Uterus (tissue), 4 donors: ENCODE measurements at regions of chr6 and their contacts with region 1.

Region 1: GRCh38 chr6:104525677-104526312 is 333.9 kb downstream of the HACE1 start:
- DNase-seq: peak; percentile 39 to 50
- H3K4me3 ChIP-seq: no peak overlapping the region
- H3K27ac ChIP-seq: peak overlapping the region in 1 of 2 donors; percentile 7
- H3K4me1 ChIP-seq: no peaks in the 10 kb centered on the region
- H3K27me3 ChIP-seq: no peaks in the 10 kb centered on the region
- CTCF ChIP-seq: peak; percentile 68 to 81 (median 70)
- POLR2A ChIP-seq: no peak

Region 2: DNA sequence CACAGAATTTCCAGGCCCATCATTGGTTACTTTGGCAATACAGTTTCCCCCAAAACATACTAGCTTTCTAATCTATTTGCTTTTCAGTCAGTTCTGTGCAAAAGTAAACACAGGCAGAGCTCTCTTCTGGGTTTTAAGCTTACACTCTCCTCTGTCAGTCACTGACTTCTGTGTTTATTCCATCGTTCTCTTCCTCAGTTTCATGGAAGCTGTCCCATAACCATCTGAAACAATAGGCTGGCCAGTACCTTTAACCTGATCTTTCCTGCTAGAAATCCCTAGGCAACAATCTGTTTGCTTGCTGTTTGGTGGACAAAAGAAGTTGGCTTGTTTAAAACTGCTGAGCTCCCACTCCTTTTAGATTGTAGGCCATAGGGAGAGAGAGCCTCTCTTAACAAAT is 97.6 kb before region 1 on chr6:
- intact Hi-C with region 1: no loop called
- DNase-seq: no peak
- H3K4me3 ChIP-seq: no peak overlapping the region
- H3K27ac ChIP-seq: no peak overlapping the region
- H3K4me1 ChIP-seq: no peaks in the 10 kb centered on the region
- H3K27me3 ChIP-seq: no peaks in the 10 kb centered on the region
- CTCF ChIP-seq: no peak
- POLR2A ChIP-seq: no peak

Region 3: DNA sequence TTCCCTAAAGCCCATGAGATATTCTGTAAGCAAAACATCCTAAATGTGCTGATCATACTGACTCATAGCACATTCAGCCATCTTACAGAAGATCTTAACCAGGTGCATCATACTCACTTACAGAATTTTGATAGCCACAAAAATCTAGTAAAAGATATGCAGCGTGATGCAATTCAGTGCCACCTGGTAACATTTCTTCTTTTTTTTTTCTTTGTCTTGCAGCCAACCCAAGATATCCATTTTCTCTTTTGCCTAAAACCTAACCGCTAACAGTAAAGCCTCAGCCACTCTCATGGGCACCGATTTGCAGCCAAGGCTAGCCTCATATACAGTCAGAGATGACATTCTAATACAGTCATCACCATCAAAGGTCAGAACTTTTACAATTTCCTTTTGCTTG is 40.6 kb after region 1 on chr6:
- intact Hi-C with region 1: no loop called
- DNase-seq: no peak
- H3K4me3 ChIP-seq: no peak overlapping the region
- H3K27ac ChIP-seq: no peak overlapping the region
- H3K4me1 ChIP-seq: no peaks in the 10 kb centered on the region
- H3K27me3 ChIP-seq: no peaks in the 10 kb centered on the region
- CTCF ChIP-seq: no peak
- POLR2A ChIP-seq: no peak

Region 4: DNA sequence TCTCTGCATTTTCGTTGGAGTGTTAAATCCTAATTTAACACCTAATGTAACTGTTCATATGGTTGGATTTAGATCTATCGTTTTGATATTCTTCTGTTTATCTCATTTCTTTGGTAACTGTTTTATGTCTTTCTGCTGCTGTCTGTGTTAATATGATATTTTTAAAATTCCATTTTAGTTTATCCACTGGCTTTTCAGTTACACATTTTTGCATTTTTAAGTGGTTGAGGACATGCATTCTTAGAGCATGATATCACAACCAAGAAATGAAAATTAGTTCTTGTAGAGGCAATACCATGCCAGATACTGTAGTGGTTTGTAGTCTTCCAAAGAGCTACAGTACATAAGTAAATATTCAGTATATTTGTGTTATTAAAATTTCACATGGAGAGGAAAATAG is 489.7 kb after region 1 on chr6:
- intact Hi-C with region 1: loop called (anchors 10 kb)
- DNase-seq: no peak
- H3K4me3 ChIP-seq: no peak overlapping the region
- H3K27ac ChIP-seq: no peak overlapping the region
- H3K4me1 ChIP-seq: no peaks in the 10 kb centered on the region
- H3K27me3 ChIP-seq: no peaks in the 10 kb centered on the region
- CTCF ChIP-seq: no peak
- POLR2A ChIP-seq: no peak